Activated CD4-positive, alpha-beta T cell treated with anti-CD3 and anti-CD28 coated beads for 36 hours (primary cell): ENCODE measurements at regions of chr6 and their contacts with region 1.

Region 1: DNA sequence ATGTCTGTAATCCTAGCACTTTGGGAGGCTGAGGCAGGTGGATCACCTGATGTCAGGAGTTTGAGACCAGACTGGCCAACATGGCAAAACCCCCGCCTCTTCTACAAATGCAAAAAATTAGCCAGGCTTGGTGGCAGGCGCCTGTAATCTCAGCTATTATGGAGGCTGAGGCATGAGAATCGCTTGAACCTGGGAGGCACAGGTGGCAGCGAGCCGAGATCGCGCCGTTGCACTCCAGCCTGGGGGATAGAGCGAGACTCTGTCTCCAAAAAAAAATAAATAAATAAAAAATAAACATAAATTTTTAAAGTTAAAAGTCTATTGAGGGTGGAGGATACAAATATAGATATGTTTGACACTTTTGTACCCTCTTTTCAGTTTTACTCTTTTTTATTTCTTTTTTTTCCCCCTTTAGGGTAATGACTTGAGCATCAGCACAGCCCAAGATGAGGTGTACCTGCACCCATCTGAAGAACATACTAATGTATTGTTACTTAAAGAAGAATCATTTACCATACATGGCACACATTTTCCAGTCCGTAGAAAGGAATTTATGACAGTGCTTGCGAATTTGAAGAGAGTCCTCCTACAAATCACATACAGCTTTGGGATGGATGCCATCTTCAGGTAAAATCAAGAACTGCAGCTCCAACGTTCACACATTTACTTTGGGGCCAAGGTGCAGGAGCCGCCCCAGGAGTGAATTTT is 368.9 kb downstream of the LAMA2 start:
- DNase-seq: peak; percentile 71
- ATAC-seq: peak; percentile 82
- H3K4me3 Mint-ChIP-seq: no peak overlapping the region
- H3K27ac Mint-ChIP-seq: no peak overlapping the region
- H3K4me1 Mint-ChIP-seq: peaks cover 17% of the 10 kb centered on the region
- H3K27me3 Mint-ChIP-seq: peaks cover 7% of the 10 kb centered on the region

Region 2: GRCh38 chr6:128327890-128328289 is 923.9 kb before region 1 on chr6:
- CTCF ChIA-PET with region 1: no interaction called
- POLR2A ChIA-PET with region 1: no interaction called
- intact Hi-C with region 1: loop called in 1 of 2 experiments (anchors 5 kb)
- DNase-seq: peak; percentile 30
- ATAC-seq: peak; percentile 80
- H3K4me3 Mint-ChIP-seq: no peak overlapping the region
- H3K27ac Mint-ChIP-seq: no peak overlapping the region
- H3K4me1 Mint-ChIP-seq: no peaks in the 10 kb centered on the region
- H3K27me3 Mint-ChIP-seq: no peaks in the 10 kb centered on the region

Region 3: DNA sequence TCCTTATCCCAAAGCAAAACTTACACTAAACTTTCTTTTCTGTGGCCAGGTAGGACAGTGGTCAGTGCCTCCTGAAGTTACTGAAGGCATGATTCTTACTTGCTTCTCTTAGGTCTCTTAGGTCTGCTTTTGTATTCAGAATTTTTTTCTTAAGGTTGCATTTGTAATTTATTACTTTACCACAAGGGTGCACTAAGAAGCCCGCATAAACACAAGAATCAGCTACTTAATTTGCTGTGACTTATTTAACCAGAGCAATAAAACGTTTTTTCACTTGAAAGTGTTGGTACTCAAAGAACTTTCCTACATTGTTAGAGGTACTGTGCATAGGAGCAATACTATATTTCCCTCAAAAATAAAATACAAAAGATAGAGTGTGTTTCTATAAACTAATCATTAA is 444.2 kb before region 1 on chr6:
- CTCF ChIA-PET with region 1: interaction called, 3 read pairs
- POLR2A ChIA-PET with region 1: no interaction called
- intact Hi-C with region 1: loop called in 1 of 2 experiments (anchors 2 kb)
- DNase-seq: no peak
- ATAC-seq: no peak
- H3K4me3 Mint-ChIP-seq: no peak overlapping the region
- H3K27ac Mint-ChIP-seq: no peak overlapping the region
- H3K4me1 Mint-ChIP-seq: no peaks in the 10 kb centered on the region
- H3K27me3 Mint-ChIP-seq: peaks cover 8% of the 10 kb centered on the region

Region 4: GRCh38 chr6:128822271-128822670 is 429.6 kb before region 1 on chr6:
- CTCF ChIA-PET with region 1: no interaction called
- POLR2A ChIA-PET with region 1: no interaction called
- intact Hi-C with region 1: no loop called
- DNase-seq: no peak
- ATAC-seq: no peak
- H3K4me3 Mint-ChIP-seq: no peak overlapping the region
- H3K27ac Mint-ChIP-seq: no peak overlapping the region
- H3K4me1 Mint-ChIP-seq: no peaks in the 10 kb centered on the region
- H3K27me3 Mint-ChIP-seq: peaks cover 12% of the 10 kb centered on the region

Region 5: GRCh38 chr6:129359811-129360681 is 108.2 kb after region 1 on chr6:
- CTCF ChIA-PET with region 1: no interaction called
- POLR2A ChIA-PET with region 1: no interaction called
- intact Hi-C with region 1: loop called in 1 of 2 experiments (anchors 10 kb)
- DNase-seq: no peak
- ATAC-seq: no peak
- H3K4me3 Mint-ChIP-seq: no peak overlapping the region
- H3K27ac Mint-ChIP-seq: no peak overlapping the region
- H3K4me1 Mint-ChIP-seq: no peaks in the 10 kb centered on the region
- H3K27me3 Mint-ChIP-seq: peaks cover 5% of the 10 kb centered on the region

Region 6: GRCh38 chr6:129490521-129491245 is 238.9 kb after region 1 on chr6:
- CTCF ChIA-PET with region 1: no interaction called
- POLR2A ChIA-PET with region 1: no interaction called
- intact Hi-C with region 1: loop called in 1 of 2 experiments (anchors 5 kb)
- DNase-seq: peak; percentile 71
- ATAC-seq: peak; percentile 84
- H3K4me3 Mint-ChIP-seq: peak overlapping the region; percentile 70
- H3K27ac Mint-ChIP-seq: peak overlapping the region; percentile 97
- H3K4me1 Mint-ChIP-seq: peaks cover 70% of the 10 kb centered on the region
- H3K27me3 Mint-ChIP-seq: no peaks in the 10 kb centered on the region

Region 7: DNA sequence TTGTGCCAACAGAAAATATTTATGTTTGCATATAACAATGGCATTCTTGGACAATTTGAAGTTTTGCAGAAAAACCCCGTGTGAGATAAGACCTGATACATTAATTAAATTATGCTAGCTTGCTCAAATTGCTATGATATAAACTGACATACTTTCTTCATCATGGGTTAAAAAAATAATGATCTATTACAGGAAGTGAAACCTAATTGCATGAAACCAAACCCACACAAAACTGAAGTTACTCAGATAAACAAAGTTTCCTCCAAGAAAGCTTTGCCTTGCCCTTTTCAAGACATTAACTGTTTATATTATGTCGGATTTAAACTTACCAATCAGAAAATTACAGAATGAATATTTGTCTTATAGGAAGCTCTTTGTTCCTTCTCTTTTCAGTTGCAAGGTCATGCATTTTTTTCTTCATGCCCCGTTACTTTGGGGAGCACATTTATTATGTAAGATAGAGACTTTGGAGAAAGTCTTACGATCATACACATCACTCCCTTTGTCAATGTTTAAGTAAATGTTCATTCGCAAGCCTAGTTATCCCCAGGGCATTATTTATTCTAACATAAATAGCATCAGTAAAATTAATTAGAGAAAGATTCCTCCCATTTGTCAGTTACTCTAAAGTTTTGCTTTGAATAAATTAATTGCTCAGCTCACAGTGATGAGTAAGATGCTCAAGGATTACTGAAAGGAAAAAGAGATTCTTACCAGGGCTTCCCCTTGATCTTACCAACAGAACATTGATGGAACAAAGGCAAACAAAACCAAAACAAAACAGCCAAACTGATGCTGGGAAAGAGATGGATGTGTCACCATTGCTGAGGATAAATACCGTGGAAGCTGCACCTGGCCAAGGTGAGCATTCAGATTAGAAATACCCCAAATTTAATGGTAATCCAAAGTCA is 624.0 kb after region 1 on chr6:
- CTCF ChIA-PET with region 1: no interaction called
- POLR2A ChIA-PET with region 1: no interaction called
- intact Hi-C with region 1: no loop called
- DNase-seq: no peak
- ATAC-seq: peak; percentile 79
- H3K4me3 Mint-ChIP-seq: no peak overlapping the region
- H3K27ac Mint-ChIP-seq: peak overlapping the region; percentile 20
- H3K4me1 Mint-ChIP-seq: peaks cover 13% of the 10 kb centered on the region
- H3K27me3 Mint-ChIP-seq: no peaks in the 10 kb centered on the region